HAP-1 (cell line): ENCODE measurements at regions of chr1 and their contacts with region 1.

Region 1: DNA sequence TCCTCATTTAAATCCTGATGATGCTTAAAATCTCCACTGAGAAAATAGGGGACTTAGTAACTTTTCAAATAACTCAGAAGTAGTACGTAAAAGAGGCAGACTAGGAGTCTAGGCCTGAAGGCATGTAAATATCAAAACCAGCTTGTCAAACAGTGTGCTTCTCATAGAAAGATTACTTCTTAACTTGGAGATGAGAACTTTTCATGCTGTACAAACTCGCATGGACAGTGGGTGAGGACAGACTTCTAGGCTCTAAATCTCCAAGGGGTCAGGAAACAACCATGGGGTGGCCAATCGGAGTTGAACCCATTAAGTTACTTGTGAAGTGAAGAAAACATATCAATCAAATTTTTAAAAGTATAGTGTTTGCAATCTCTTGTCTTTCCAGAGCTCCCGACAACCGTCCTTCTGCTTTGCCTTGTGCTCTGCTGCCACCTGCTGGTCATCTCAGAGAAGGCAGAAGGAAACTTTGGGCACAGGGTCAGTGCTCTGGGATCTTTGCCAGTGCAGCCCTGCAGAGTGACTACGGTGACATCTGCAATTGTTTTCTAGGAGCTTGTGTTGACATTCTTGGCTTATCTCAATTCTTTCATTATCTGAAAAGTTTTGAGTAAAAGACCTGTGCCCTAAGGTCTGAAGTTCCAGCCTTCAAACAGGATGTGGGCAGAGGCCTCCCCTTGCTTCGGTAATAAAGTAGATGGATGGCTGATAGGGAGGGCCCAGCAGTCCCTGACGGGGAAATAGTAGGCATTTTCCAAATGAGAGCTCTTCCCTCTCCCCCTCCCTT is 105.1 kb upstream of the PDE4B start:
- DNase-seq: peak; percentile 59 to 90
- H3K4me3 ChIP-seq: no peak overlapping the region
- H3K4me1 ChIP-seq: no peaks in the 10 kb centered on the region
- H3K27me3 ChIP-seq: no peaks in the 10 kb centered on the region

Region 2: GRCh38 chr1:65235867-65236805 is 451.5 kb before region 1 on chr1:
- in situ Hi-C with region 1: loop called (anchors 10 kb)
- DNase-seq: peak in 1 of 2 experiments; percentile 57
- H3K4me3 ChIP-seq: no peak overlapping the region
- H3K4me1 ChIP-seq: peaks cover 5% of the 10 kb centered on the region; the same call in 1 of the 2 replicates
- H3K27me3 ChIP-seq: no peaks in the 10 kb centered on the region

Region 3: GRCh38 chr1:65431111-65431705 is 256.4 kb before region 1 on chr1:
- in situ Hi-C with region 1: loop called (anchors 10 kb)
- DNase-seq: peak in 1 of 2 experiments; percentile 42
- H3K4me3 ChIP-seq: no peak overlapping the region
- H3K4me1 ChIP-seq: peaks cover 15% of the 10 kb centered on the region
- H3K27me3 ChIP-seq: no peaks in the 10 kb centered on the region